AG04449 (cell line): ENCODE measurements at regions of chr22 and their contacts with region 1.

Region 1: GRCh38 chr22:46013460-46014416 is 36.8 kb upstream of the WNT7B start:
- DNase-seq: peak; percentile 76
- H3K4me3 ChIP-seq: peak overlapping the region; percentile 73
- CTCF ChIP-seq: peak; percentile 79

Region 2: DNA sequence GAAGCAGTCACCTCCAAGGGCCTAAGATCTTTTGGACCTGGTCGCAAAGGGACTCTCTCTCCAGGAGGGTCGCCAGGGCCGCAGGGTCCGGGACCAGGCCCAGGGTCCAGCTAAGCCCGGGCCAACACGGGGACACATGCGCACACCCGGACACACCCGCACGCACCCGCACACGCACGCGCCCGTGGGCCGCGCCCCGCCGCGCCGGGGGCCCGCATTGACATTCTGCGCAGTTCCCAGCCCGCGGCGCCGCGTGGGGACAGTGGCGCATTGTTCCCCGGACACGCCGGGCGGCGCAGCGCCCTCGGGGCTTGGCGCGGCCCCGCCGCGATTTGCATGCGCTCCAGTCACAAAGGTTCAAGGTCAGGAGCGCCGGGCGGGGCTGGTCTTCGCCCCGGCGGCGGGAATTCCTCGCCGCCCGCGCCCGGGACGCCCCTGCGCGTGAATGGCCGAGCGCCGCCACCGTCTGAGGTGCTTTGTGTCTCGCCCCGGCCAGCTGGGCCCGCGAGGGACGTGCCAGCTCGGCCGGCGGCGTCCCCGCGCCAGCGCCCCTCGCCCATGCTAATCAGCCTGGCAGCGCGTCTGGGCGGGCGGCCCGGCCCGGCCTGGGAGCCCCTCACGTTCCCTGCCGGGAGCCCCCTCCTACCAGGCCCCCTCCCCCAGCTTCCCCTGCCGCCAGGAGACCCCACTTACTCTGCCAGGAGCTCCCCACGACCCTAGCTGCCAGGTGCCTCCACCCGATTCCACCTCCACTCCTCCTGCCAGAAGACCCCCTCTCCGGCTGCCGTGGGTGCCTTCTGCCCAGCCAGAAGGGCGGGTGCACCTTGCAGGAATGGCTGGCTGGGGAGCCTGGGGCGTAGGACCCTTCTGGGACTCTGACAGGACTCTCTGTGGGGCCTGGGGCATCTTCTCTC is 13.7 kb after region 1 on chr22:
- CTCF ChIA-PET with region 1: interaction called, 29 read pairs
- POLR2A ChIA-PET with region 1: interaction called, 3 read pairs
- DNase-seq: no peak
- H3K4me3 ChIP-seq: peak overlapping the region; percentile 8
- CTCF ChIP-seq: no peak

Region 3: GRCh38 chr22:46071451-46072109 is 57.8 kb after region 1 on chr22:
- CTCF ChIA-PET with region 1: interaction called, 14 read pairs
- POLR2A ChIA-PET with region 1: interaction called, 6 read pairs
- DNase-seq: peak; percentile 53
- H3K4me3 ChIP-seq: peak overlapping the region; percentile 77
- CTCF ChIP-seq: no peak

Region 4: GRCh38 chr22:46087336-46088277 is 73.9 kb after region 1 on chr22:
- CTCF ChIA-PET with region 1: interaction called, 75 read pairs
- POLR2A ChIA-PET with region 1: interaction called, 8 read pairs
- DNase-seq: no peak
- H3K4me3 ChIP-seq: peak overlapping the region; percentile 30
- CTCF ChIP-seq: no peak

Region 5: GRCh38 chr22:46116491-46116958 is 102.8 kb after region 1 on chr22:
- CTCF ChIA-PET with region 1: interaction called, 345 read pairs
- POLR2A ChIA-PET with region 1: no interaction called
- DNase-seq: no peak
- H3K4me3 ChIP-seq: no peak overlapping the region
- CTCF ChIP-seq: peak; percentile 76

Region 6: DNA sequence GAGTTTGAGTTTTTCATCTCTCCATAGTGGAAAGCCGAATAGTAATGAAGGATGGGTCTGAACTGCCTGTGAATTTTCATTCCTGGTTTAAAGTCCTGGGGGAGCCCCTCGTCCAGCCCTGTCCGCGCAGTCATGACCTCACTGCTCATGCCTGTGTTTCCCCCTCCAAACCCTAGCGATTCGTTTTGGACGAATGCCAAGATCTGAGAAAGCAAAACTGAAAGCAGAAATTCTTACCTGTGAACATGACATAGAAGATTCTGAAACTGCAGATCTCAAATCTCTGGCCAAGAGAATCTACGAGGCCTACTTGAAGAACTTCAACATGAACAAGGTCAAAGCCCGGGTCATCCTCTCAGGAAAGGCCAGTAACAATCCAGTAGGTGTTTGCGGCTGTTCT is 205.9 kb after region 1 on chr22:
- CTCF ChIA-PET with region 1: no interaction called
- POLR2A ChIA-PET with region 1: no interaction called
- DNase-seq: no peak
- H3K4me3 ChIP-seq: no peak overlapping the region
- CTCF ChIP-seq: no peak

Region 7: DNA sequence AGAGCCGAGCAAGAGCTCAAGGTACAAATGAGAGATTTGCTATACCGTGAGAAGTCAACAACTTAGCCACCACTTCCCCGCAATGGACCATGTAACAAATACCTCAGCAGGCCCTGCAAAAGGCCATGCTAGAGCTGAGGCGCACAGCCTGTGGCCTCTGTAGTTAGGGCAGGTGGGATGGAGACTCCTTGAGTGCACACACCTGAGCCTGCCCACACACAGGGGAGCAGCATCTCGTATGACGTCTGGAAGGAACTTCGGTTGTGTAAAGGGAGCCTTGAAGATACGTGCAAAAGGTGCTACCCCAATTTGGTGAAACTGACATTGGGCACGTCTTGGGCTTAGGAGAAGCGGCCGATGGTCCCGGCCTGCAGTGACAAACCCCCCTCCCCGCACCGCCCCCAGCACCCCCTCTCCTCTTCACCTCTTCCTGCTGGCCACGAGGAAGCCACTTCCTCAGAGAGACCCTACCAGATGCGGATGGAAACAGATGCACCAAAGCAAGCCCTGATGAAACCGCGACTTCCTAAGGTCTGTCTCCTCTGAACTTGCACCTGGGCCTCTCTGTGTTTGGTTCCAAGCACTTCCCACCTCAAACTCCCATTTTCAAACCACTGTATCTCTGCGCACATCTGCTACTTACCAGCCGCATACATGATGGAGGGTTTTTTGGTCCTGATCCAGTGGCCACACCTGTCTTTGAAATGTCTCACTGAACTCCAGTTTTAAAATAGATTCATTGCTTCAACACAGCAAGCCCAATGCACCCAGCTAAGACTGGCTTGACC is 225.7 kb after region 1 on chr22:
- CTCF ChIA-PET with region 1: no interaction called
- POLR2A ChIA-PET with region 1: no interaction called
- DNase-seq: no peak
- H3K4me3 ChIP-seq: no peak overlapping the region
- CTCF ChIP-seq: no peak